ENCODE measurements at regions of chr1 and their contacts with region 1.

Region 1: DNA sequence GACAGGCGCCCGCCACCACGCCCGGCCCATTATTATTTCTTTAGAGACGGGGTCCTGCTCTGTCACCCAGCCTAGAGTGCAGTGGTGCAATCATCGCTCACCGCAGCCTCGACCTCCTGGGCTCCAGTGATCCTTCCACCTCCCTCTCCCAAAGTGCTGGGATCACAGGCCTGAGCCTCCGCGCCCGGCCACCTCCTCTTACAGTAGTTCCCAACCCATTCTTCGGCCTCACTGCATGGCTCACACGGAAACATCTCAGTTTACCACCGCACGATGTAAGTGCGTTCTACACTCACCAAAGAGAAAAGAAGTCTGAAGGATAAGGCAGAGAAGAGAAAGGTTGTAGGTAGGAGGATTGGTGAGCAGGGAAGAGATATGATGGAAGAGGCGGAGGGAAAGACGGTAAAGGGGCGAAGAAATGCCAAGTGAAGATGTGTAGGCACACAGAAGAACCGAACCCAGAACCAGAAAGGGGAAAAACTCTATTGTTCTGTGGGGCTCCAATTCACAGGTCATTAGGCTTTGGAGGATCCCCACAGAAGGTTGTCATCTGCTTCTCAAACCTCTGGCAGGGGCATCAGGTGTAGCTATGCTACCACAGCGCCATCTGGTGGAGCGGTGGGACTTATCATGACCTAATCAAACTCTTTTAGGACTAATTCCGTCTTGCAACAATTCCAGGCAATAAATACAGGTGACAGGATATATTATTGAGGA is 504.2 kb downstream of the SMYD3 start:
- DNase-seq: peak; percentile 94
- H3K4me3 ChIP-seq: no peak overlapping the region
- H3K27ac ChIP-seq: no peak overlapping the region
- H3K4me1 ChIP-seq: no peaks in the 10 kb centered on the region
- H3K27me3 ChIP-seq: no peaks in the 10 kb centered on the region
- CTCF ChIP-seq: peak; percentile 52 to 87 (median 78)
- POLR2A ChIP-seq: no peak

Region 2: DNA sequence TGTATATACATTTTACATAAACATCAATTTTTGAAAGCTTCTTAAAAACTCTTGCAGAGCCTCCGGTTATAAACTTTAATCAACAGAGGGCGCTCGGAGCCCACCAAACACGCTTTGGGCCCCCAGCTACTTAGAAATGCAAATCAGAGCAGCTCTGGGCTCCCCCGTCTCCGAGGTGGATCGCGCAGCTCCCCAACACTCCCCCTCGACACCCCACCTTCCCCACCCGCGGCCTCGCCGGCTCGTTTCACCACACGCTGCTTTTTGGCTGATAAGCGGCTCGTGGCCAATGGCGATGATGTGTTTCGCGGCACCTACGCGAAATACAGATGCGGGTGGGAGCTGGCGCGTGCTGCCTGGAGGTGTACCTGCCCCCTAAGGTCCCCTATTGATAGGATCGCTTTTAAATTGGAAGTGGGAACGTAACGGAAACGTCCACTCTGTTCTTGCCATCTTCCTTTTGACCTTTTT is 849.8 kb before region 1 on chr1:
- intact Hi-C with region 1: loop called (anchors 5 kb)
- DNase-seq: peak; percentile 84
- H3K4me3 ChIP-seq: peak overlapping the region; percentile 40 to 77 (median 60)
- H3K27ac ChIP-seq: no peak overlapping the region
- H3K4me1 ChIP-seq: peaks cover 29 to 48% (median 44%) of the 10 kb centered on the region in 6 donors
- H3K27me3 ChIP-seq: peaks cover 0 to 97% (median 47%) of the 10 kb centered on the region in 7 donors
- CTCF ChIP-seq: peak in 10 of 11 experiments; percentile 16 to 73 (median 52)
- POLR2A ChIP-seq: no peak

Region 3: GRCh38 chr1:245788269-245788668 is 214.6 kb before region 1 on chr1:
- intact Hi-C with region 1: no loop called
- DNase-seq: no peak
- H3K4me3 ChIP-seq: no peak overlapping the region
- H3K27ac ChIP-seq: no peak overlapping the region
- H3K4me1 ChIP-seq: no peaks in the 10 kb centered on the region
- H3K27me3 ChIP-seq: no peaks in the 10 kb centered on the region
- CTCF ChIP-seq: no peak
- POLR2A ChIP-seq: no peak